ENCODE measurements at regions of chr1 and their contacts with region 1.

Region 1: GRCh38 chr1:184754476-184755225 is at the start of gene EDEM3:
- DNase-seq: peak; percentile 97 to 100 (median 99)
- H3K4me3 ChIP-seq: peak within 1 kb of the TSS; percentile 73 to 96
- H3K4me3 Mint-ChIP-seq: peak within 1 kb of the TSS; percentile 90 to 98 (median 96)
- H3K27ac ChIP-seq: peak within 1 kb of the TSS; percentile 94
- H3K27ac Mint-ChIP-seq: peak within 1 kb of the TSS; percentile 82 to 98 (median 96)
- H3K4me1 ChIP-seq: peaks cover 32% of the 10 kb centered on the region
- H3K4me1 Mint-ChIP-seq: peaks cover 33 to 57% (median 44%) of the 10 kb centered on the region in 4 donors
- H3K27me3 ChIP-seq: no peaks in the 10 kb centered on the region
- H3K27me3 Mint-ChIP-seq: no peaks in the 10 kb centered on the region
- total RNA-seq, gene EDEM3: 58.6 to 61.7 TPM

Region 2: DNA sequence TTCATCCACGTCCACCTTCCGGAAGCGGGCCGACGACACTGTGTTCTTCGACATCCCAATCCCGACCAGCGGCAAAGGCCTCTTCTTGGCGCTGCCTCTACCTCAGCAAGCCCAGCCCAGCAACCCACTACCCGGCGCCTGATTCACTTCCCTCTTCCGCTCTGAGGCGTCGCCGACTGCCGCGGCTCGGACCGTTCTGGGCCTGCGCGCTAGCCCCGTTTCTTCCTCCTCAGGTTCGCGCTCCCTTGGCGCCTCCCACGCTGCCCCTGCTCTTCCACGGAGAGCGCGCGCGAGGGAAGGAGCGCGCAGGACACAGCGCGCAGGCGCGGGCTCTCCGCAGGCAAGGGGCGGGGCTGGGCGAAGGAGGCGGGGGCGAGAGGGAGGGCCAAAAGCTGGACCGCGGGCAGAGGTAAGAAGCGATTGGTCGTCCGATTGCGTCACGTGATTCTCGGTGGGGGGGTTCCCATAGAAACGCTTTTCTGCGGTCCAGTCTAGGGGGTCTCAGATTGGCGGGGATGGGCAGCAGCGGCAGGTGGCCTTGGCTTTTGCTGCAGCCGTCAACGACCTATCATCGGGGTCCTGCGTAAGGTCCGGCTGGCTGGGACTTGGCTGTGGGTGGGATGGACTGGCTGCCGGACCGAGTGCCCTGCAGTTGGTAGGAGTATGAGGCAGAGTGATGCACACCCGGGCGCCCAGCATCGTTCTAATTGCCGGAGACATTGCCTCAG is 1118.9 kb before region 1 on chr1 and contains the start of gene ARPC5:
- CTCF ChIA-PET with region 1: no interaction called
- POLR2A ChIA-PET with region 1: no interaction called
- intact Hi-C with region 1: loop called (anchors 10 kb)
- DNase-seq: peak; percentile 94 to 95 (median 94)
- H3K4me3 ChIP-seq: peak within 1 kb of the TSS; percentile 72 to 88
- H3K4me3 Mint-ChIP-seq: peak within 1 kb of the TSS; percentile 100
- H3K27ac ChIP-seq: peak within 1 kb of the TSS; percentile 81
- H3K27ac Mint-ChIP-seq: peak within 1 kb of the TSS; percentile 92 to 100 (median 99)
- H3K4me1 ChIP-seq: peaks cover 44% of the 10 kb centered on the region
- H3K4me1 Mint-ChIP-seq: peaks cover 26 to 54% (median 36%) of the 10 kb centered on the region in 4 donors
- H3K27me3 ChIP-seq: no peaks in the 10 kb centered on the region
- H3K27me3 Mint-ChIP-seq: no peaks in the 10 kb centered on the region
- total RNA-seq, gene ARPC5: 106 to 107 TPM

Region 3: GRCh38 chr1:183804881-183805841 is 949.5 kb before region 1 on chr1 and contains the start of gene RGL1:
- CTCF ChIA-PET with region 1: no interaction called
- POLR2A ChIA-PET with region 1: no interaction called
- intact Hi-C with region 1: no loop called
- DNase-seq: peak in 4 of 5 donors; percentile 5 to 21 (median 16)
- H3K4me3 ChIP-seq: peak within 1 kb of the TSS in 1 of 2 donors; percentile 55
- H3K4me3 Mint-ChIP-seq: peak within 1 kb of the TSS; percentile 85 to 95 (median 91)
- H3K27ac ChIP-seq: no peak within 1 kb of the TSS
- H3K27ac Mint-ChIP-seq: peak within 1 kb of the TSS in 4 of 7 donors; percentile 2 to 78 (median 10)
- H3K4me1 ChIP-seq: peaks cover 8% of the 10 kb centered on the region
- H3K4me1 Mint-ChIP-seq: peaks cover 5 to 7% (median 7%) of the 10 kb centered on the region in 4 donors
- H3K27me3 ChIP-seq: no peaks in the 10 kb centered on the region
- H3K27me3 Mint-ChIP-seq: peaks cover 6 to 10% of the 10 kb centered on the region in 2 donors
- total RNA-seq, gene RGL1: 5.1 to 5.3 TPM

Region 4: DNA sequence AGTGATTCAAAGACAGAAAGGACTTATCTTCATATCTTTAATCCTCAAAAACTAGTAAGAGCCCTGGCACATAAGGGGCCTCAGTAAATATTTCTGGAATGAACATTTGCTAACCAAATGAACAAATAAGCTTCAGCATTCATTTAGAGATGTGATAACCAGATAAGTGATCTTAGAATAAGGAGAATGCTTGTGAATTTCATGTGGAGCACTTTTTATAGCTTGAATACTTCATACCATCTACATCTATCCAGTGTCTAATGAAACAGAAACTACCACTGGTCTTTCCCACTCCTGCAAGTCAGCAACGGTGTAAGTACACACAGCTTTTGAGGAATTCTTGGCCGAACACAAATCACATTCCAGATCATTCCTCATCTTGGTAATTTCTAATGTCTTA is 38.5 kb before region 1 on chr1:
- CTCF ChIA-PET with region 1: no interaction called
- POLR2A ChIA-PET with region 1: interaction called, 6 read pairs
- intact Hi-C with region 1: loop called (anchors 5 kb)
- DNase-seq: no peak
- H3K4me3 ChIP-seq: no peak overlapping the region
- H3K4me3 Mint-ChIP-seq: no peak overlapping the region
- H3K27ac ChIP-seq: no peak overlapping the region
- H3K27ac Mint-ChIP-seq: peak overlapping the region in 3 of 7 donors; percentile 25 to 73 (median 50)
- H3K4me1 ChIP-seq: peaks cover 5% of the 10 kb centered on the region
- H3K4me1 Mint-ChIP-seq: peaks cover 0 to 6% (median 2%) of the 10 kb centered on the region in 4 donors
- H3K27me3 ChIP-seq: no peaks in the 10 kb centered on the region
- H3K27me3 Mint-ChIP-seq: no peaks in the 10 kb centered on the region

Region 5: GRCh38 chr1:184743062-184743756 is 11.4 kb before region 1 on chr1:
- CTCF ChIA-PET with region 1: interaction called, 6 read pairs
- POLR2A ChIA-PET with region 1: interaction called, 104 read pairs
- intact Hi-C with region 1: loop called (anchors 1 kb)
- DNase-seq: peak; percentile 73 to 84 (median 78)
- H3K4me3 ChIP-seq: no peak overlapping the region
- H3K4me3 Mint-ChIP-seq: peak overlapping the region; percentile 15 to 80 (median 70)
- H3K27ac ChIP-seq: peak overlapping the region; percentile 47
- H3K27ac Mint-ChIP-seq: peak overlapping the region; percentile 83 to 97 (median 95)
- H3K4me1 ChIP-seq: peaks cover 62% of the 10 kb centered on the region
- H3K4me1 Mint-ChIP-seq: peaks cover 46 to 68% (median 61%) of the 10 kb centered on the region in 4 donors
- H3K27me3 ChIP-seq: no peaks in the 10 kb centered on the region
- H3K27me3 Mint-ChIP-seq: no peaks in the 10 kb centered on the region

Region 6: GRCh38 chr1:184866991-184867788 is 112.5 kb after region 1 on chr1:
- CTCF ChIA-PET with region 1: no interaction called
- POLR2A ChIA-PET with region 1: interaction called, 4 read pairs
- intact Hi-C with region 1: loop called (anchors 10 kb)
- DNase-seq: peak; percentile 73 to 86 (median 76)
- H3K4me3 ChIP-seq: no peak overlapping the region
- H3K4me3 Mint-ChIP-seq: peak overlapping the region; percentile 19 to 77 (median 58)
- H3K27ac ChIP-seq: peak overlapping the region; percentile 43
- H3K27ac Mint-ChIP-seq: peak overlapping the region; percentile 81 to 95 (median 90)
- H3K4me1 ChIP-seq: peaks cover 33% of the 10 kb centered on the region
- H3K4me1 Mint-ChIP-seq: peaks cover 32 to 50% (median 39%) of the 10 kb centered on the region in 4 donors
- H3K27me3 ChIP-seq: no peaks in the 10 kb centered on the region
- H3K27me3 Mint-ChIP-seq: peaks cover 0 to 2% of the 10 kb centered on the region in 2 donors

Region 7: GRCh38 chr1:185044981-185045813 is 290.5 kb after region 1 on chr1 and contains the start of gene RNF2:
- CTCF ChIA-PET with region 1: no interaction called
- POLR2A ChIA-PET with region 1: interaction called, 3 read pairs
- intact Hi-C with region 1: loop called (anchors 1 kb)
- DNase-seq: peak; percentile 76 to 88 (median 83)
- H3K4me3 ChIP-seq: peak within 1 kb of the TSS; percentile 72 to 78
- H3K4me3 Mint-ChIP-seq: peak within 1 kb of the TSS; percentile 94 to 99 (median 96)
- H3K27ac ChIP-seq: peak within 1 kb of the TSS; percentile 71
- H3K27ac Mint-ChIP-seq: peak within 1 kb of the TSS; percentile 88 to 98 (median 96)
- H3K4me1 ChIP-seq: peaks cover 31% of the 10 kb centered on the region
- H3K4me1 Mint-ChIP-seq: peaks cover 31 to 53% (median 43%) of the 10 kb centered on the region in 4 donors
- H3K27me3 ChIP-seq: no peaks in the 10 kb centered on the region
- H3K27me3 Mint-ChIP-seq: no peaks in the 10 kb centered on the region
- total RNA-seq, gene RNF2: 27.0 TPM

Region 8: DNA sequence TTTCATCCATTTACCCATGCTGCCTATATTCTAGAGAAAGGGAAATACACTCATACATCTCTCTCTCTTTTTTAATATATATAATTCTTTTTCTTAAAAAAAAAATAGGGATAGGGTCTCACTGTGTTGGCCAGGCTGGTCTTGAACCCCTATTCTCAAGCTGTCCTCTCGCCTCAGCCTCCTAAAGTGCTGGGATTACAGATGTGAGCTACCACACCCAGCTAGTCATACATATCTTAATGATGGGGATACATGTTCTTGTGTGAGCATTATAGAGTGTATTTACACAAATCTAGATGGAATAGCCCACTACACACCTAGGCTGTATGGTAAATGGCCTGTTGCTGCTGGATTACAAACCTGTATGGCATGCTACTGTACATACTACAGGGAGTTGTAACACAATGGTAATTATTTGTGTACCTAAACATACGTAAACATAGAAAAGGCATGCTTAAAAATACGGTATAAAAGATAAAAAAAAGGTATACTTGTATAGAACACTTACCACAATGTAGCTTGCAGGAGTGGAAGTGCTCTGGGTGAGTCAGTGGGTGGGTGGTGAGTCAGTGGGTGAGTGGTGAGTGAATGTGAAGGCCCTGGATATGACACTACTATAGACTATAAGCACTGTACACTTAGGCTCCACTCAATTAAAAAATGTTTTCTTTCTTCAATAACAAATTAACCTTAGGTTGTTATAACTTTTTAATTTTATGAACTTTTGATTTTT is 489.5 kb after region 1 on chr1:
- CTCF ChIA-PET with region 1: no interaction called
- POLR2A ChIA-PET with region 1: no interaction called
- intact Hi-C with region 1: no loop called
- DNase-seq: no peak
- H3K4me3 ChIP-seq: no peak overlapping the region
- H3K4me3 Mint-ChIP-seq: no peak overlapping the region
- H3K27ac ChIP-seq: no peak overlapping the region
- H3K27ac Mint-ChIP-seq: peak overlapping the region in 1 of 7 donors; percentile 22
- H3K4me1 ChIP-seq: peaks cover 20% of the 10 kb centered on the region
- H3K4me1 Mint-ChIP-seq: peaks cover 15 to 33% (median 23%) of the 10 kb centered on the region in 4 donors
- H3K27me3 ChIP-seq: no peaks in the 10 kb centered on the region
- H3K27me3 Mint-ChIP-seq: no peaks in the 10 kb centered on the region

Region 9: DNA sequence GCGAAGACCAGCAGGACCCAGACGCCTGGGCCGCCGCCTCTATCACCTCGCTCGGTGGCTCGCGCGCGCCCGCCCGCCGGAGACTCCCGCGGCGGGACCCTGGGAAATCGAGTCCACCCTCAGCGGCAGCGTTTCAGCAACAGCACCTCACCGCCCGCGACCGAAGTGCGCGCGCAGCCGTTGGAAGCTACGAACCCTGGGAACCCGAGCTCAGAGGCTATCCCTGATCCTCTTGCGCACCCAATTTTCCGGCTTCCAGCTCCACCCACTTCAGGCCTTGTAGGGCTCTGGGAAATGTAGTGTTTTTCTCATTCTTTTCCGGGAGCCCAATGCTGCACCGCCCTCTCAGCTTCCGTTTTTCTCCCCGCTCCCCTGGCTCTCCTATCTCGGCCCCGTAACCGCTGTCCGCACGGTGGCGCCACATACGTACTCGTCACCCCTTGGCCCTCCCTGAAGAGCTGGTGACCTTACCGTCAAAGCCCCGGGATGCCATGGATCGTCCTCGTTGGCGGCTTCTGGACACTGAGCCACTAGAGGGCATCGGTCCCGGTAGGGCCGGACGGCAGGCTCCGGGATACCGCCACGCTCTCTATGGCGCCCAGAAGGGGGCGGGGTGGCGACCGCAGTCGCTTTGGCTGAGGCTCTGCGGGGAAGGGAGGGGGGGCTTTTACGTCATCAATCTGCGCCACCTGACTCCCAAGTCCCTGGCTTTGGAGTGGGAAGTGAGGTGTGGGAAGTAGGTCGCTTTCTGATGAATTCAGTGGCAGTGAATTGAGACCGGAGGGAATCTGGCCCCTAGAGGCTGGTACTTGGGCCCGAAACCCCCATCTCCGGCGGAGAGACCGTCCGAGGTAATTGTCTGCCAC is 1620.7 kb after region 1 on chr1 and contains the starts of genes ODR4 and TPR:
- CTCF ChIA-PET with region 1: no interaction called
- POLR2A ChIA-PET with region 1: interaction called, 4 read pairs
- intact Hi-C with region 1: loop called (anchors 1 kb)
- DNase-seq: peak; percentile 97 to 99 (median 98)
- H3K4me3 ChIP-seq: peak within 1 kb of the TSS; percentile 87 to 96
- H3K4me3 Mint-ChIP-seq: peak within 1 kb of the TSS; percentile 91 to 99 (median 98)
- H3K27ac ChIP-seq: peak within 1 kb of the TSS; percentile 83
- H3K27ac Mint-ChIP-seq: peak within 1 kb of the TSS; percentile 93 to 99 (median 98)
- H3K4me1 ChIP-seq: peaks cover 44% of the 10 kb centered on the region
- H3K4me1 Mint-ChIP-seq: peaks cover 19 to 61% (median 39%) of the 10 kb centered on the region in 4 donors
- H3K27me3 ChIP-seq: no peaks in the 10 kb centered on the region
- H3K27me3 Mint-ChIP-seq: no peaks in the 10 kb centered on the region
- total RNA-seq, gene ODR4: 15.9 to 17.3 TPM
- total RNA-seq, gene TPR: 159 to 167 TPM